Activated CD4-positive, alpha-beta memory T cell treated with anti-CD3 and anti-CD28 coated beads, Interleukin-2, amount 10 ng/mL, durations not matched to agents 7 days and 5 days (primary cell): ENCODE measurements at regions of chr7 and their contacts with region 1.

Region 1: GRCh38 chr7:104231054-104232046 is 23.5 kb upstream of the ORC5 start:
- DNase-seq: peak; percentile 40
- H3K4me3 Mint-ChIP-seq: no peak overlapping the region
- H3K27ac Mint-ChIP-seq: no peak overlapping the region
- H3K4me1 Mint-ChIP-seq: no peaks in the 10 kb centered on the region
- H3K27me3 Mint-ChIP-seq: peaks cover 26% of the 10 kb centered on the region

Region 2: DNA sequence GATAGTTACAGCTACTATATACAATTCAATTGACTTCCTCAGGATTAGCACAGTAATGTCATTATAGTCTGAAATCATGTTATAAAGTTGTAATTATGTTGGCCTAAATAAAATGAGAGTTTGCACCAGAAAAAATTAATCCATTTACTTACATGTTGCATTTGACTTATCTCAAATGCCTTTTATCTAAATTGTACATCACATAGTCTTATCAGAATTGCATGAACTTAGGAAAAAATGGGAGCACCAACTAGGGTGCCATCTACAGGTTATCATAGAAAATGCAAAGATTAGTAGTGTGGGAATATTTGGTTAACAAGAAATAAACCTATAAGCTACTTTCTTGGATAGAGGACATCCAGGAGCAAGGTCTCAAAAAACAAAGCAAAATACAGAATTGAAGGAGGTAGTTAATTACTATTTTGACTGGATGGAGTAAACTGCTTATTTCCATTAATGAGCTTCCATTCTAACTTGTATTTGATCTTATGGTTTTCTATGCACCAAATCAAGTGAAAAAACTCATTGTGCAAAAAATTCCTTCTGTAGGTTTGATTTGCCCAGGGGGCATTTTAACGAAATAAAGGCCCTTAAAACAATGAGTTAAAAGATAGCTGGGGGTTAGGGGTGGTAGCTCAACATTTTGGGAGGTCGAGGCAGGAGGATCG is 36.5 kb after region 1 on chr7:
- CTCF ChIA-PET with region 1: interaction called, 25 read pairs
- POLR2A ChIA-PET with region 1: no interaction called
- DNase-seq: no peak
- H3K4me3 Mint-ChIP-seq: no peak overlapping the region
- H3K27ac Mint-ChIP-seq: no peak overlapping the region
- H3K4me1 Mint-ChIP-seq: no peaks in the 10 kb centered on the region
- H3K27me3 Mint-ChIP-seq: peaks cover 21% of the 10 kb centered on the region

Region 3: GRCh38 chr7:104848138-104848990 is 617.0 kb after region 1 on chr7:
- CTCF ChIA-PET with region 1: interaction called, 19 read pairs
- POLR2A ChIA-PET with region 1: no interaction called
- DNase-seq: peak; percentile 45
- H3K4me3 Mint-ChIP-seq: no peak overlapping the region
- H3K27ac Mint-ChIP-seq: no peak overlapping the region
- H3K4me1 Mint-ChIP-seq: no peaks in the 10 kb centered on the region
- H3K27me3 Mint-ChIP-seq: peaks cover 10% of the 10 kb centered on the region

Region 4: DNA sequence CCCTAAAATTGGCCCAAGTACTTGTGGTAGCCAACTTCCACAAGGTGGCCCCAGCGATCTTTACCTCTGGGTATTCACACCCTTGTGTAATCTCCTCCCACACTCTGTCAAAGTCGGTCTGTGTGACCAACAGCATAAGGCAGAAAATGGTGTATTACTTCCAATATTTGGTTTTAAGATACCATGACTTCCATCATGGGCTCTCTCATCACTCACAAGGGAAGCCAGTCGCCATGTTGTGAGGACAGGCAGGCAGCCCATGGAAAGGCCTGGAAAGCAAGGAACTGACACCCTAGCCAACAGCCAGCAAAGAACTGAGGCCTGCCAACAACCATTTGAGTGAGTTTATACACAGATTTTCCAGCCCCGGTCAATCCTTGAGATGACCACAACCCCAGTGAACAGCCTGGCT is 691.7 kb after region 1 on chr7:
- CTCF ChIA-PET with region 1: interaction called, 15 read pairs
- POLR2A ChIA-PET with region 1: no interaction called
- DNase-seq: peak; percentile 82
- H3K4me3 Mint-ChIP-seq: no peak overlapping the region
- H3K27ac Mint-ChIP-seq: no peak overlapping the region
- H3K4me1 Mint-ChIP-seq: peaks cover 10% of the 10 kb centered on the region
- H3K27me3 Mint-ChIP-seq: peaks cover 6% of the 10 kb centered on the region